ENCODE measurements at regions of chr2 and their contacts with region 1.

Region 1: DNA sequence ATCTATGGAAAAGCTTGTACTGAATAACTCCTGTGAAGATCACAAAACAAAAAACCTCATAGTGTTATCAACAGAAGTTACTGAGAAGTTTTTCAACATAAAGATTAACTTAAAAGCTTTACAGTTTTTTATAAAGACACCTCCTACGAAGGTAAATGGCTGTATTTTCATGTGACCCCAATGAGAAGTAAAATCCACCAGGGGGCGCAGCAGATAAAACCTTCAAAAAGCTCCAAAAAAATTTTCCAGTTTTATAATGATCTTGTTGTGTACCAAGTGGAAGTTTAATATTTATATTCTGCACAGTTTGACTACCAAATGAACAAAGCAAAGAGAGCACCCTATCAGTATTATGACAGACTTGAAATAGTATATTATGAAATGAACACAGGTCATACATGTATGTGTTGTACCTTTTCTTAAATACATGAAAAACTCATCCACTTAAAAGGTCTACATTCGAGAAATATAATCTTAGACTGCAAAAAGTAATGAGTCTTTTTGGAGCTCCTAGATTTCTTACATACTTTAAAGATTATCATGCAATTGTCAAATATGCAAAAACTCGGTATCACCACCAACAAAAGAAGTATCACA is 38.5 kb downstream of the PNO1 start:
- DNase-seq: peak in 1 of 4 experiments; percentile 50
- ATAC-seq: no peak
- H3K4me3 ChIP-seq: no peak overlapping the region
- H3K27ac ChIP-seq: peak overlapping the region; percentile 8; the same call in 1 of the 3 replicates
- H3K4me1 ChIP-seq: peaks cover 5 to 32% of the 10 kb centered on the region in 2 experiments
- H3K27me3 ChIP-seq: no peaks in the 10 kb centered on the region
- CTCF ChIP-seq: peak in 2 of 3 experiments; percentile 23 to 47; a peak in 3 of 6 replicates
- EP300 ChIP-seq: no peak
- POLR2A ChIP-seq: no peak
- RAD21 ChIP-seq: peak in 1 of 2 experiments; percentile 28; a peak in 1 of 4 replicates

Region 2: DNA sequence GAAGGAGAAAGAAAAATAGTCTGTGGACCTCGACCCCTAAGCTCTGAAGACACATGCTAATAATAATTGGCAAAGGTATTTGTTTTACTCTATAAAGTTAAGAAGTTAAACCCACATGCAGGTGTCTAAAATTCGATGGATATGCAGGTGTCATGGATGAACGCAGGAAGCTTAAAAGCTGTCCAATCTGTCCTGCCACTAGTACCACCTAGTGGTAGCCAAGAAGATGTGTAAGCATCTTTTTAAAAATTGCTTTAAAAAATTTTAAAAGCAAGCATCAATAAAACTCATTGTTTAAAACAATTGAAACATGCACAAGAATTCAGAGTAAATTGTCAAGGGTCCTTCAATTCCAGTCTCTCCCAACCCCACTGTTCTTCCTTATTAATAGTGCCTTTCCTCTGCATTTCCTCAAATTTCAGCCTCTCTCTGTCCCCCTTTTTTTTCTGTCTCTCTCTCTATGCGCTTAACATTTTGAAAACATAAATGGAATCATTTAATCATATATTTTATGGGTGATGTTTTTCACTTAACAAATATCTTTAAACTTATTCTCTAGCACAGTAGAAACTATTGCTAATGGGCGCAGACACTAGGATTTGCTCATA is 86.7 kb after region 1 on chr2:
- CTCF ChIA-PET with region 1: no interaction called
- POLR2A ChIA-PET with region 1: no interaction called
- in situ Hi-C with region 1: no loop called
- intact Hi-C with region 1: loop called (anchors 5 kb)
- DNase-seq: peak; percentile 56 to 62 (median 58)
- ATAC-seq: peak; percentile 75
- H3K4me3 ChIP-seq: no peak overlapping the region
- H3K27ac ChIP-seq: no peak overlapping the region
- H3K4me1 ChIP-seq: peaks cover 8 to 24% of the 10 kb centered on the region in 2 experiments; a peak in 4 of 5 replicates
- H3K27me3 ChIP-seq: no peaks in the 10 kb centered on the region
- CTCF ChIP-seq: peak; percentile 71 to 87 (median 71)
- EP300 ChIP-seq: no peak
- POLR2A ChIP-seq: no peak
- RAD21 ChIP-seq: peak; percentile 67 to 78